HEK293 (cell line): ENCODE measurements at regions of chr9 and their contacts with region 1.

Region 1: DNA sequence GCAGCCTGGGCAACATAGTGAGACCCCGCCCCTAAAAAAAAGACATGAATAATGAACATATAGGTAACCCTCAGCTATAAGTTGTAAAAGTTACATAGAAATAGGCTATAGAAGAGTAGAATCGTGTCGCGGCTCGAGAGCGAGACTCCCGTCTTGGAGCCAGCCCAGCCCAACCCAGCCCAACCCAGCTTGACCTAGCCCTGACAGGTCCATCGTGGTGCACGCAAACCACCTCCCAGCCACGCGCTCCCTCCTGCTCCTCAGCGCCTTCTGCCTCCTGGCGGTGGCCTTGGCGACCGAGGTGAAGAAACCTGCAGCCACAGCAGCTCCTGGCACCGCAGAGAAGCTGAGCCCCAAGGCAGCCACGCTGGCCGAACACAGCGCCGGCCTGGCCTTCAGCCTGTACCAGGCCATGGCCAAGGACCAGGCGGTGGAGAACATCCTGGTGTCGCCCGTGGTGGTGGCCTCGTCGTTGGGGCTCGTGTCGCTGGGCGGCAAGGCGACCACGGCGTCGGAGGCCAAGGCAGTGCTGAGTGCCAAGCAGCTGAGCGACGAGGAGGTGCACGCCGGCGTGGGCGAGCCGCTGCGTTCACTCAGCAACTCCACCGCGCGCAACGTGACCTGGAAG is 10.8 kb downstream of the KIF24 start:
- H3K4me3 ChIP-seq: no peak overlapping the region
- H3K27ac ChIP-seq: no peak overlapping the region
- H3K4me1 ChIP-seq: peaks cover 2% of the 10 kb centered on the region; the same call in 1 of the 2 replicates
- CTCF ChIP-seq: no peak

Region 2: DNA sequence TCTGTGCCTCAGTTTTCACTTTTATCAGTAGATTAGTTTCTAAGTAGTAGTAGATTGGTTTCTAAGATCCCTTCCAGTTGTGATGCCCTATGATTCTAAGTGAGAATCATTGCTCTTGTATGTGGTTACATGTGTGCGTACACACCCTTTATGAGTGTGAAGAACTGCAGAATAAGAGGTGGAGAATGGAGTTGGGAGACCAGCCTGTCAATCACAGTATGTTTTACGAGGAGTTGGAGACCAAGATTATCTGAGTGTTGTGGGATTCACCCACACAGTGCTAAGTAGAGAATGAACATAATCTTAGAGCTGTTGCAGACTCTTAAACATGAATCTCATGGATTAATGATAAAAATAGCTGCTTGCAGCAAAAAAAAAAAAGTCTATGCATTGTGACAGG is 26.9 kb before region 1 on chr9:
- CTCF ChIA-PET with region 1: interaction called, 10 read pairs
- POLR2A ChIA-PET with region 1: no interaction called
- H3K4me3 ChIP-seq: no peak overlapping the region
- H3K27ac ChIP-seq: no peak overlapping the region
- H3K4me1 ChIP-seq: no peaks in the 10 kb centered on the region
- CTCF ChIP-seq: no peak

Region 3: GRCh38 chr9:34346873-34347799 is 28.9 kb after region 1 on chr9:
- CTCF ChIA-PET with region 1: no interaction called
- POLR2A ChIA-PET with region 1: no interaction called
- H3K4me3 ChIP-seq: no peak overlapping the region
- H3K27ac ChIP-seq: no peak overlapping the region
- H3K4me1 ChIP-seq: no peaks in the 10 kb centered on the region
- CTCF ChIP-seq: no peak

Region 4: DNA sequence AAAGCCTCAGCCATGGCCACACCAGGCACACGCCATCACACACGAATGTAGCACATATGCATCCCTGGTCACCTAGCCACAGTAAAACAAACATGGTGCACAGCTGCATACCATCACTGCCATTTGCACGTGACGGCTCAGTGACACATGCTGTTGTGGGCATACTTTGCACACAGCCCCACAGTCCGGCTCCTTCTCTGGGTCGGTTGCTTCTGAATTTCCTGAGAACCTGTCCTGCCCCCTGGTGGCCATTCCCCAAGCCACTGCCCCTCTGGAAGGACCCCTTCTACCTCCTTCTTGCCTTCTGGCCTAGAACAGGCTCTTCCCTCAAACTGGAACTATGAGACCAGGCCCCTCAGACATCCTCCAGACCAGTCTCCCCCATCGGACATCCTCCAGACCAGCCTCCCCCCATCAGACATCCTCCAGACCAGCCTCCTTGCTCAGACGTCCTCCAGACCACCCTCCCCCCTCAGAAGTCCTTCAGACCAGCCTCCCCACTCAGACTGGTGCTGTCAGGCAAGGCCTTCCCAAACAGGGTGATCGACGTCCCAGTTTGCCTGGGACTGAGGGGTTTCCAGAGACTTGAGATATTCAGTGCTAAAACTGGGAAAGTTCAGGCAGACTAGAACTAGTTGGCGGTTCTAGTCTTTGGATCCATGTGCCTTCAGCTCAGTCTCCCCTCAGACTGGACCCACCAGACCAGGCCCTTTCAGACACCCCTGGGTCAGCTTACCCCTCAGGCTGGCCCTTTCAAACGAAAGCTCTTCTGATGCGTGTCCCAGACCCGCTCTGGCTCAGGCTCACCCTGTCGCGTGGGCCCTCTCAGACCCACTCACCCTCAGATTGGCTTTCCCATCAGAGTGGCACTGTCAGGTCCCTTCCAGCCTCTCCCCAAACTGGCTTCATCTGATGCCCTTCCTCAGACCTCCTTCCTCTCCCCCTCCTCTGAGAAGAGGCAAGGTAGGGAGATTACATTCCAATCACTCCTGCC is 228.9 kb after region 1 on chr9:
- CTCF ChIA-PET with region 1: no interaction called
- POLR2A ChIA-PET with region 1: no interaction called
- H3K4me3 ChIP-seq: no peak overlapping the region
- H3K27ac ChIP-seq: no peak overlapping the region
- H3K4me1 ChIP-seq: no peaks in the 10 kb centered on the region
- CTCF ChIP-seq: peak; percentile 38; the same call in 1 of the 2 replicates